Prostate gland (tissue), 2 donors: ENCODE measurements at regions of chrX and their contacts with region 1.

Region 1: GRCh38 chrX:111098874-111099273 is 2.9 kb downstream of the PAK3 start:
- DNase-seq: no peak
- H3K4me3 ChIP-seq: no peak overlapping the region
- H3K27ac ChIP-seq: no peak overlapping the region
- H3K4me1 ChIP-seq: no peaks in the 10 kb centered on the region
- H3K27me3 ChIP-seq: no peaks in the 10 kb centered on the region
- CTCF ChIP-seq: peak; percentile 20 to 41 (median 36)
- POLR2A ChIP-seq: no peak

Region 2: DNA sequence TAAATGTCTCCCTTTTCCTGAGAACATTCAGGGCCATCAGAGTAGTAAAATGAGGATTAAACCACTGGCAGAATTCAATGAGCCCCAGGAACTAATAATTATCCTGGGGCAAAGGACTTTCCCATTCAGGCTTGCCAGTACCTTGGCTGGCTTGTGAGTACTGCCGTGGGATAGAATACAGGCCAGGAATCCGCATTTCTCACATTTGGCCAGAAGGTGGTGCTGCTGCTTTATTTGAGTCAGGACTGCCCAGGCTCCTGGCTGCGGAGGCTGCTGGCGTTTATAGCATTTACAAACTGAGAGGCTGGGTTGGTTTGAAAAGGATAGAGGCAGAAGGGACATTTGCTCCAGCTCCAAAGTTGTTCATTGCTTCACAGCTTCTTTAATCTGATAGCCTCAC is 648.8 kb before region 1 on chrX:
- intact Hi-C with region 1: loop called (anchors 10 kb)
- DNase-seq: peak; percentile 70
- H3K4me3 ChIP-seq: no peak overlapping the region
- H3K27ac ChIP-seq: no peak overlapping the region
- H3K4me1 ChIP-seq: no peaks in the 10 kb centered on the region
- H3K27me3 ChIP-seq: no peaks in the 10 kb centered on the region
- CTCF ChIP-seq: peak; percentile 26 to 72 (median 56)
- POLR2A ChIP-seq: no peak

Region 3: DNA sequence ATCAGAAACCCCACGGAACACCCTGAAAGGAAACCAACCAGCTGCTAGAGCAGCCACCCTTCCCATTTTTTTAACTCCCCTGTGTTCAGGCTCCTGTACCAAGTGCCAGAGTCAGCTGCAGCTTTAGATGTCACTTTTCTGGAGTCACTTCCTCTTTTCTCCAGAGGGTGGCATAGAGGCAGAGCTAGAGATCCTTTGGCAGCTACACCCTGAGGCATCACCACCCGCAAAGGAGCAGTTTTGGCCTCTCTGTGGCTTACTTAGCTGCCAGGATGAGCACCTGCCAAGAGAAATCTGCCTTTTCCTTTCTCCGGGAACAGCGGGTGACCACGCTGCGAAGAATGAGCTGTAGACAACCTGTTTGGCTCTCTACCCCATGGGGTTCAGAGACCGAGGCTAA is 245.3 kb before region 1 on chrX:
- intact Hi-C with region 1: loop called (anchors 5 kb)
- DNase-seq: peak; percentile 20
- H3K4me3 ChIP-seq: no peak overlapping the region
- H3K27ac ChIP-seq: no peak overlapping the region
- H3K4me1 ChIP-seq: no peaks in the 10 kb centered on the region
- H3K27me3 ChIP-seq: no peaks in the 10 kb centered on the region
- CTCF ChIP-seq: peak in 3 of 4 experiments; percentile 14 to 42 (median 37)
- POLR2A ChIP-seq: no peak

Region 4: GRCh38 chrX:110944311-110944750 is 154.5 kb before region 1 on chrX:
- intact Hi-C with region 1: loop called (anchors 10 kb)
- DNase-seq: peak; percentile 5
- H3K4me3 ChIP-seq: peak overlapping the region; percentile 19 to 23
- H3K27ac ChIP-seq: peak overlapping the region; percentile 47 to 51
- H3K4me1 ChIP-seq: no peaks in the 10 kb centered on the region
- H3K27me3 ChIP-seq: no peaks in the 10 kb centered on the region
- CTCF ChIP-seq: no peak
- POLR2A ChIP-seq: no peak